Vagina (tissue), 2 donors: ENCODE measurements at regions of chr19 and their contacts with region 1.

Region 1: GRCh38 chr19:47821460-47822020 is at the start of gene CRX:
- DNase-seq: no peak
- H3K4me3 ChIP-seq: no peak within 1 kb of the TSS
- H3K27ac ChIP-seq: no peak within 1 kb of the TSS
- H3K4me1 ChIP-seq: no peaks in the 10 kb centered on the region
- H3K27me3 ChIP-seq: no peaks in the 10 kb centered on the region
- CTCF ChIP-seq: no peak
- POLR2A ChIP-seq: no peak
- total RNA-seq, gene CRX: not detected

Region 2: GRCh38 chr19:47778089-47778953 is 43.2 kb before region 1 on chr19 and contains the start of gene SELENOW:
- intact Hi-C with region 1: no loop called
- DNase-seq: no peak
- H3K4me3 ChIP-seq: peak within 1 kb of the TSS; percentile 86
- H3K27ac ChIP-seq: peak within 1 kb of the TSS; percentile 99
- H3K4me1 ChIP-seq: peaks cover 47% of the 10 kb centered on the region
- H3K27me3 ChIP-seq: no peaks in the 10 kb centered on the region
- CTCF ChIP-seq: no peak
- POLR2A ChIP-seq: peak in 1 of 2 donors; percentile 95
- total RNA-seq, gene SELENOW: 442 TPM

Region 3: GRCh38 chr19:47863514-47863936 is 42.0 kb after region 1 on chr19:
- intact Hi-C with region 1: loop called (anchors 1 kb)
- DNase-seq: no peak
- H3K4me3 ChIP-seq: no peak overlapping the region
- H3K27ac ChIP-seq: no peak overlapping the region
- H3K4me1 ChIP-seq: no peaks in the 10 kb centered on the region
- H3K27me3 ChIP-seq: no peaks in the 10 kb centered on the region
- CTCF ChIP-seq: peak; percentile 60 to 82 (median 64)
- POLR2A ChIP-seq: no peak